HCT116 (cell line): ENCODE measurements at regions of chr10 and their contacts with region 1.

Region 1: GRCh38 chr10:103481974-103482531 is 3.0 kb upstream of the CALHM3 start:
- DNase-seq: peak; percentile 87
- ATAC-seq: peak; percentile 69
- H3K4me3 ChIP-seq: no peak overlapping the region
- H3K27ac ChIP-seq: no peak overlapping the region
- H3K4me1 ChIP-seq: peaks cover 18 to 45% of the 10 kb centered on the region in 2 experiments
- H3K27me3 ChIP-seq: no peaks in the 10 kb centered on the region
- CTCF ChIP-seq: peak; percentile 83 to 91 (median 87)
- POLR2A ChIP-seq: no peak
- RAD21 ChIP-seq: peak; percentile 82

Region 2: DNA sequence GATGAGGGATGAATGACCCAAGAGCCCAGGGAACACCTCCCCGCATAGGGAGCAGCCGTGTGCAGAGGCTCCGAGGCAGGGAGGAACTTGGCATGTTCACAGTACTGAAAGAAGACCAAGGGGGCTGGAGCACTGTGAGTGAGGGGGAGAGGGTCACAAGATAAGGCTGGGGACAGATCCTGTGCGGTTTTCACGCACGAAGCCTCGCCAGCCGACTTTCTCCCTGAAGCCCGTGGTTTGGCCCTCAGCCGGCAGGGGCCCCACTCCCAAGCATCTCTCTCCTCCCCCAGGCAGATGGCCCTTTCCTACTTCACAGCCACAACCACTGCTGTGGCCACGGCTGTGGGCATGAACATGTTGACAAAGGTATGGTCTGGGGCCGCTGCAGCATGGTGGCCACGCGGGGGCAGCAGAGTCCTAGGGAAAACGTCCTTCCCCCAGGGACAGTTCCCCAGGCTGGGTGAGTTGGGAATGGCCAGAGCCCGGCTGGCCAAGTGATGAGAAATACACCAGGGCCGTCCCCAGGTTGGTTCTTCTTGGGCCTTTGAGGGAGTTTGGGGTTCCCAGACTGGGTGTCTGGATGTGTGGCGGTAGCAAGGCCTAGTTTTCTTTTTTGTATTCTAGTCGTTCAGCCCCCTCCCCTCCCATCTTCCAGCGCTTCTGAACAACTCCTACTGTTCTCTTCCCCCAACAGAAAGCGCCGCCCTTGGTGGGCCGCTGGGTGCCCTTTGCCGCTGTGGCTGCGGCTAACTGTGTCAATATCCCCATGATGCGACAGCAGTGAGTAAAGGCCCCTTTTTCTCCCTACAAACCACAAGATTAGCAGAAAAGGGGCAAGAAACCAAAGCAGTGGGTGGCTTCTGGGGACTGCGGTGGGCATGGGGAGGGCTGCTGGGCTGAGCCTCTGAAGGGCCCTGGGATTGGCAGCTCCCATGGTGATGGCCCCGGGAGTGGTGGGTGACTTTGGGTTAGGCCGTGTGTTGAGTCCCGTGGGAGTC is 752.7 kb before region 1 on chr10:
- CTCF ChIA-PET with region 1: no interaction called
- POLR2A ChIA-PET with region 1: no interaction called
- RAD21 ChIA-PET with region 1: no interaction called
- intact Hi-C with region 1: loop called (anchors 10 kb)
- DNase-seq: peak; percentile 49
- ATAC-seq: peak; percentile 99
- H3K4me3 ChIP-seq: no peak overlapping the region
- H3K27ac ChIP-seq: no peak overlapping the region
- H3K4me1 ChIP-seq: no peaks in the 10 kb centered on the region
- H3K27me3 ChIP-seq: no peaks in the 10 kb centered on the region
- CTCF ChIP-seq: peak; percentile 83 to 99 (median 99)
- POLR2A ChIP-seq: no peak
- RAD21 ChIP-seq: peak; percentile 95

Region 3: GRCh38 chr10:102815790-102816549 is 666.1 kb before region 1 on chr10:
- CTCF ChIA-PET with region 1: no interaction called
- POLR2A ChIA-PET with region 1: no interaction called
- RAD21 ChIA-PET with region 1: no interaction called
- intact Hi-C with region 1: no loop called
- DNase-seq: no peak
- ATAC-seq: no peak
- H3K4me3 ChIP-seq: no peak overlapping the region
- H3K27ac ChIP-seq: no peak overlapping the region
- H3K4me1 ChIP-seq: no peaks in the 10 kb centered on the region
- H3K27me3 ChIP-seq: no peaks in the 10 kb centered on the region
- CTCF ChIP-seq: no peak
- POLR2A ChIP-seq: no peak
- RAD21 ChIP-seq: no peak

Region 4: DNA sequence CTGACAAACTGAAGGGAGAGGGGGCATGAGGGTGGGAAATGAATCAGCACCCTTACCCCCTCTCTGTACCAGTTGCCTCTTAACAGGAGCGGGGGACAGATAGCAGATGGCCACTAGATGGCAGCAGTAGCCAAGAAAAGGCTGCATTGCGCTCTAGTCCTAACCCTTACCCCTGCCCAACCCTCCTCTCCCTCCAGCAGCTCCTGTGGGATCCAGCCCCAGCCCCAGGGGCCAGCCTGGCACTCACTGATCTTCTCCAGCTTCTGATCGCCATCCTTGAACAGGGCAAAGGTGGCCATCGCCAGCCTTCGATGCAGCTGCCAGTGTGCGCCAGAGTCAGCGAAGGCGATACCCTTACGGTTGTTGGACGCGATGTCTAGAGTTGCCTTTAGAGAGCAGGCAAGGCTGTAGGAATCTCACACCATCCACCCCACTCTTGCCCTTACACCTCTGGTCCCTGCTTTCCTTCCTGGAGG is 647.0 kb before region 1 on chr10:
- CTCF ChIA-PET with region 1: no interaction called
- POLR2A ChIA-PET with region 1: no interaction called
- RAD21 ChIA-PET with region 1: no interaction called
- intact Hi-C with region 1: loop called (anchors 1 kb)
- DNase-seq: peak; percentile 77
- ATAC-seq: peak; percentile 100
- H3K4me3 ChIP-seq: no peak overlapping the region
- H3K27ac ChIP-seq: no peak overlapping the region
- H3K4me1 ChIP-seq: no peaks in the 10 kb centered on the region; a peak in 1 of 4 replicates
- H3K27me3 ChIP-seq: no peaks in the 10 kb centered on the region; the same call in 1 of the 2 replicates
- CTCF ChIP-seq: peak; percentile 92 to 99 (median 93)
- POLR2A ChIP-seq: no peak
- RAD21 ChIP-seq: peak; percentile 98

Region 5: DNA sequence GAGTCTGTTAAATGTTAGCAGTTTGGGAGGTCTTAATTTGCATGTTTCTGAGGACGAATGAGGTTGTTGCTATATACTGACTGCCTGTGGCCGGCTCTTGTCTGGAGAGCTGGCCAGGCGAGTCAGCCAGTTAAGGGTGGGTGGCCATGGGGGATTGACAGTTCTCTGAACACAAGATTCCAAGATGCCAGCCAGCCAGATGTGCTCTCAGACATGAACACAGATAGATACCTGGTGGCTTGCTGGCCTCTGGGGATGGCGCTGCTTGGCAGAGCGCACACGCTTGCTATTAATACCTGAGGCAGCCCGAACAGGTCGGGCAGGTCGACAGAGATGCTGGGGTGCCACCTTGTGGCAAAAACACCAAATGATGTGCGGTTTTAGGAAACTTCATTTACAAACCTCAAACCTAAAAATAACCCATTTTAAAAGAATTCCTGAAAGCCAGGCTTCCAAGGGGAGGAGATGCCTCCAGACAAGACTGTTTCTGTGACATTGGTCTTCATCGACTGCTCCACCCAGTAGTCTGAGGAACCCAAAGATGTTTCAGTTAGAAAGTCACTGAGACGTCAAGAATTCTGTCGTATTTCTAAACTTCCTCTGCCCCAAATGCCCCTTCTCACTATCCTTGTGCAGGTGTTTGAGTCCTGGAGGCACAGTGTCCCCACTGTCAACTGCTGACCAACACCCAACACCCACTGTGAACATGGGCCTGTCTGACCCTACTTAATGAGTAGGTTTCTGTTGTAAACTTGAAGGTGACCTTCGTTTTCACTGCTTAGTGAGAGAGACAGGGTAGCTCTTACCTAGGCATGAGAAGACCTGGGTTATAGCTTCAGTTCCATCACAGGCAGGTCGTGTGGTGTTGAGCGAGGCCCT is 412.4 kb before region 1 on chr10:
- CTCF ChIA-PET with region 1: no interaction called
- POLR2A ChIA-PET with region 1: no interaction called
- RAD21 ChIA-PET with region 1: interaction called in 1 of 2 experiments, 3 read pairs
- intact Hi-C with region 1: loop called (anchors 1 kb)
- DNase-seq: peak; percentile 59
- ATAC-seq: peak; percentile 93
- H3K4me3 ChIP-seq: no peak overlapping the region
- H3K27ac ChIP-seq: no peak overlapping the region
- H3K4me1 ChIP-seq: peaks cover 3 to 6% of the 10 kb centered on the region in 2 experiments; a peak in 1 of 4 replicates
- H3K27me3 ChIP-seq: no peaks in the 10 kb centered on the region
- CTCF ChIP-seq: peak; percentile 75 to 98 (median 94)
- POLR2A ChIP-seq: no peak
- RAD21 ChIP-seq: peak; percentile 98

Region 6: DNA sequence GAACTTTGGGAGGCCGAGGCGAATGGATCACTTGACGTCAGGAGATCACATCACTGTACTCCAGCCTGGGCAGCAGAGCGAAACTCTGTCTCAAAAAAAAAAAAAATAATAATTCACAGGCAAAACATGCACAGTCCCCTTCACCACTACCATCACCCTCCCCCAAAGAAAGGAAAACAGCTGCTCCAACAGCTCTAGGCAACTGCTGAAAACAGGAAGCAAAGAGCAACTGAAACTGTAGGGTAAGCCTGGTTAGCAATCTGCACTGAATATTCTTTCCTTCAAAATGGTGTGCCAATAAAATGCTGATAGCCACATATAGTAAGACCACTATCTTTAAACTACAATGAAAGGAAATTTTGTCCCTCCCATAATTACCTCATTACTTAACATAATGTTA is 300.8 kb before region 1 on chr10:
- CTCF ChIA-PET with region 1: no interaction called
- POLR2A ChIA-PET with region 1: no interaction called
- RAD21 ChIA-PET with region 1: no interaction called
- intact Hi-C with region 1: no loop called
- DNase-seq: no peak
- ATAC-seq: no peak
- H3K4me3 ChIP-seq: no peak overlapping the region
- H3K27ac ChIP-seq: no peak overlapping the region
- H3K4me1 ChIP-seq: peaks cover 8 to 13% of the 10 kb centered on the region in 2 experiments; a peak in 2 of 4 replicates
- H3K27me3 ChIP-seq: no peaks in the 10 kb centered on the region
- CTCF ChIP-seq: no peak
- POLR2A ChIP-seq: no peak
- RAD21 ChIP-seq: no peak

Region 7: GRCh38 chr10:103254538-103255325 is 227.3 kb before region 1 on chr10:
- CTCF ChIA-PET with region 1: no interaction called
- POLR2A ChIA-PET with region 1: no interaction called
- RAD21 ChIA-PET with region 1: no interaction called
- intact Hi-C with region 1: loop called (anchors 5 kb)
- DNase-seq: peak; percentile 61
- ATAC-seq: peak; percentile 93
- H3K4me3 ChIP-seq: peak overlapping the region; percentile 15 to 43; a peak in 2 of 4 replicates
- H3K27ac ChIP-seq: peak overlapping the region; percentile 33; the same call in 1 of the 2 replicates
- H3K4me1 ChIP-seq: peaks cover 16 to 22% of the 10 kb centered on the region in 2 experiments
- H3K27me3 ChIP-seq: no peaks in the 10 kb centered on the region
- CTCF ChIP-seq: no peak
- POLR2A ChIP-seq: no peak
- RAD21 ChIP-seq: no peak; the same call in 1 of the 2 replicates

Region 8: DNA sequence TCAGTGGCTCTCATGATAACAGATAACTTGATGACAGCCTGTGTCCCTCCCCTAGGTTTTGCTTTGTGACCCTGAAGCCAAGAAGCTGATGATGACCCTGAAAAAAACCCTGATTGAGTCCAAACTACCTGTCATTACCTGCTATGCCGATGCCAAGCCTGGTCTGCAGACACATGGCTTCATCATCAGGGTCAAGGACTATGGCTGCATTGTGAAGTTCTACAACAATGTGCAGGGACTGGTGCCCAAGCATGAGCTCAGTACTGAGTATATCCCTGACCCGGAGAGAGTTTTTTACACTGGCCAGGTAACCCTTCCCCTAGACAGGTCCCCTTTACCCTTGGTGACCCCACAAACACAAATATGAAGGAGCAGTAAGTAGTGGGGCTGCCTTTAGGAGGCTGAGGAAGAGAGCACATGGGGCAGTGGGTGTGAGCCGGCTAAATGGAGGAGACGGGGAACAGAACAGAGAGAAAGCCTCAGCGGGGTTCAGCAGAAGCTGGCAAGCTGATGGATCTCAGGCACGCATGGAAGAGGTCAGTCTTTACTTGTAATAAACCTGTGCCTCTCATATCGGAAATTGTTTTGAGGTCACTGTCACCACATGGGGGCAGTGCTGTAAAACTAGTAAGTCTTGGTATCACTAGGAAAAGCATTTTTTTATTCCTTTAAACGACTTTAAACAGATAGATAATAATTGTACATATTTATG is 65.5 kb before region 1 on chr10:
- CTCF ChIA-PET with region 1: interaction called, 9 read pairs
- POLR2A ChIA-PET with region 1: interaction called, 3 read pairs
- RAD21 ChIA-PET with region 1: no interaction called
- intact Hi-C with region 1: loop called (anchors 1 kb)
- DNase-seq: peak; percentile 58
- ATAC-seq: peak; percentile 80
- H3K4me3 ChIP-seq: no peak overlapping the region
- H3K27ac ChIP-seq: no peak overlapping the region
- H3K4me1 ChIP-seq: no peaks in the 10 kb centered on the region
- H3K27me3 ChIP-seq: no peaks in the 10 kb centered on the region
- CTCF ChIP-seq: peak; percentile 57 to 93 (median 77)
- POLR2A ChIP-seq: no peak
- RAD21 ChIP-seq: peak; percentile 92

Region 9: GRCh38 chr10:103451831-103452505 is 30.1 kb before region 1 on chr10 and contains the start of gene CALHM2:
- CTCF ChIA-PET with region 1: interaction called, 8 read pairs
- POLR2A ChIA-PET with region 1: interaction called, 3 read pairs
- RAD21 ChIA-PET with region 1: interaction called in 1 of 2 experiments, 3 read pairs
- intact Hi-C with region 1: loop called (anchors 2 kb)
- DNase-seq: no peak
- ATAC-seq: peak; percentile 65
- H3K4me3 ChIP-seq: peak within 1 kb of the TSS; percentile 89 to 93
- H3K27ac ChIP-seq: peak within 1 kb of the TSS; percentile 83
- H3K4me1 ChIP-seq: peaks cover 11 to 55% of the 10 kb centered on the region in 2 experiments; a peak in 3 of 4 replicates
- H3K27me3 ChIP-seq: no peaks in the 10 kb centered on the region
- CTCF ChIP-seq: 0 out of 6 replicates have a peak, but pooled peaks of 1 of the 3 experiments have one; percentile 10
- POLR2A ChIP-seq: peak; percentile 35
- RAD21 ChIP-seq: no peak
- total RNA-seq, gene CALHM2: 46.1 TPM

Region 10: GRCh38 chr10:103781329-103782061 is 299.4 kb after region 1 on chr10:
- CTCF ChIA-PET with region 1: no interaction called
- POLR2A ChIA-PET with region 1: no interaction called
- RAD21 ChIA-PET with region 1: no interaction called
- intact Hi-C with region 1: no loop called
- DNase-seq: peak; percentile 26
- ATAC-seq: peak; percentile 91
- H3K4me3 ChIP-seq: no peak overlapping the region
- H3K27ac ChIP-seq: no peak overlapping the region
- H3K4me1 ChIP-seq: peaks cover 6 to 23% of the 10 kb centered on the region in 2 experiments
- H3K27me3 ChIP-seq: no peaks in the 10 kb centered on the region; the same call in 1 of the 2 replicates
- CTCF ChIP-seq: peak; percentile 59 to 96 (median 59)
- POLR2A ChIP-seq: no peak
- RAD21 ChIP-seq: peak; percentile 61

Region 11: GRCh38 chr10:103870516-103870915 is 388.5 kb after region 1 on chr10:
- CTCF ChIA-PET with region 1: no interaction called
- POLR2A ChIA-PET with region 1: no interaction called
- RAD21 ChIA-PET with region 1: no interaction called
- intact Hi-C with region 1: no loop called
- DNase-seq: no peak
- ATAC-seq: peak; percentile 46
- H3K4me3 ChIP-seq: no peak overlapping the region
- H3K27ac ChIP-seq: no peak overlapping the region
- H3K4me1 ChIP-seq: peaks cover 12 to 25% of the 10 kb centered on the region in 2 experiments
- H3K27me3 ChIP-seq: no peaks in the 10 kb centered on the region
- CTCF ChIP-seq: peak in 1 of 3 experiments; percentile 10; a peak in 1 of 6 replicates
- POLR2A ChIP-seq: no peak
- RAD21 ChIP-seq: no peak